AG04449 (cell line): ENCODE measurements at regions of chr22 and their contacts with region 1.

Region 1: DNA sequence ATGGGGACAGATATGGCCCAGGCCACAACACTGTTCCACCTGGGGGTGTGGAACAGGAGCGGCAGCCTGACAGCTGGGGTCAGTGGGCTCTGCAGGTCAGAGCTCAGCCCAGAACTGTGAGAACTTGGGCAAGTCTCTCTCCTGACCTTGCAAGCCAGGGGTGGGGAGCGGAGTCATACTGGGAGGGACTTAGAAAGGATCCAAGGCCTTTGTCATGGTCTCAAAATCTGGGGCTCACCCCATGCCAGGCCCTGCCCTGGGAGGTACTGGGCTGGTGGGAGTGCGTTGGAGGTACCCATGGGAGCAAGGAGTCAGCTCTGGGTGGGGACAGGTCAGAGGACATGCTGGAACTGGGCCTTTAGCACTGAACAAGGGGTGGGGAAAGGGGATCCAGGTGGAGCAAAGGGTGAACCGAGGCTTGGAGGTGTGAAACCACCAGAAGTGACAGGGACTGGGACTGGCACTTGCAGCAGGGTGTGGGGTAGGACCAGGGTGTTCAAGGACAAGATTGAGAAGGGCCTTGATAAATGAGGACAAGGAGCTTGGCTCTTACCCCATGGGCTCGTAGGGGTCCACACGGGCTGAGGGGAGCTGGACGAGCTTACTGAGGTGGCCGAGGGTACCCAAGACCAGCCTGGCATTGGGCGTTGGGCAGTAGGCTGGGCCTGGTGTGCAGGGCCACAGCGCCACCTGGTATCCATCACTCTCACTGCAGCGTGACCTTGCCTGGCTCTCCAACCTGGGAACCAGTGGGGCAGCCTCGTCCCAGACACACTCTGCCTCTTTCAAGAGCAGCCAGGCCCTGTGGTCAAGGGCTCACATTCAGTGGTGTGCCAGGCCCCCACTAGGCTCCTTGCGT is 7.4 kb upstream of the PMM1 start:
- DNase-seq: no peak
- H3K4me3 ChIP-seq: no peak overlapping the region
- CTCF ChIP-seq: peak; percentile 94

Region 2: DNA sequence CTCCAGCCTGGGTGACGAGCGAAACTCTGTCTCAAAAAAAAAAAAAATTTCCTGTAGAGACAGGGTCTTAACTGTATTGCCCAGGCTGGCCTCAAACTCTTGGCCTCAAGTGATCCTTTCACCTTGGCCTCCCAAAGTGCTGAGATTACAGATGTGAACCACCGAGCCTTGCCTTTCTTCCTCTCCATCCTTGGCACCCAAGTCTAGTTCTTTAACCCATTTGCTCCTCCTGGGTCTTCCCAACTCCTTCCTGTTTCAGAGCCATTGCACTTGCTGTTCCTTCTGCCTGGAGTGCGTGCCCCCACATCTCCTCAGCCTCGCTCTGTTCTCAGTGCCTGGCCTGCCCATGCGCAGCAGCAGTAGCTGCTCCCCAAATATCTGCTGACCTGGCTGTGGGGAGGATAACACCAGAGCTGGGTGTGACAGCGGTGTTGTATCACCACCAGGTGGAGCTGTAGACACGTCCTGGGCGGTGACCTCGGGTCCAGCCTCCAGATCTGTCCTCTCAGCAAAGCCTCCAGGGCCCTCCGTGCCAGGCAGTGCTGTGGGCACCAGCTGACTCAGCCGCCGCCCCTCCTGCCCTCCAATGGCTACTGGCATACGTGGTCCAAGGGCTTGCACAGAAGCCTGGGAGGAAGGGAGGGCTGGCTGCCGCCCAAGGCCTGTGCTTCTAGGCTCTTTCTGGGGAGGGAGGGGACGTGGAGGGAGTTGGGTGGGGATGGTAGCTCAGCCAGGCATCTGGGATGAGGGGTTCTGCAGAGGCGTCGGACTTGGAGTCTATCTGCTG is 193.3 kb before region 1 on chr22:
- CTCF ChIA-PET with region 1: interaction called, 27 read pairs
- POLR2A ChIA-PET with region 1: no interaction called
- DNase-seq: no peak
- H3K4me3 ChIP-seq: no peak overlapping the region
- CTCF ChIP-seq: peak; percentile 92

Region 3: GRCh38 chr22:41532908-41533825 is 63.8 kb before region 1 on chr22:
- CTCF ChIA-PET with region 1: interaction called, 21 read pairs
- POLR2A ChIA-PET with region 1: no interaction called
- DNase-seq: no peak
- H3K4me3 ChIP-seq: no peak overlapping the region
- CTCF ChIP-seq: peak; percentile 85

Region 4: GRCh38 chr22:41551877-41552582 is 45.0 kb before region 1 on chr22:
- CTCF ChIA-PET with region 1: interaction called, 34 read pairs
- POLR2A ChIA-PET with region 1: interaction called, 3 read pairs
- DNase-seq: no peak
- H3K4me3 ChIP-seq: no peak overlapping the region
- CTCF ChIP-seq: no peak

Region 5: DNA sequence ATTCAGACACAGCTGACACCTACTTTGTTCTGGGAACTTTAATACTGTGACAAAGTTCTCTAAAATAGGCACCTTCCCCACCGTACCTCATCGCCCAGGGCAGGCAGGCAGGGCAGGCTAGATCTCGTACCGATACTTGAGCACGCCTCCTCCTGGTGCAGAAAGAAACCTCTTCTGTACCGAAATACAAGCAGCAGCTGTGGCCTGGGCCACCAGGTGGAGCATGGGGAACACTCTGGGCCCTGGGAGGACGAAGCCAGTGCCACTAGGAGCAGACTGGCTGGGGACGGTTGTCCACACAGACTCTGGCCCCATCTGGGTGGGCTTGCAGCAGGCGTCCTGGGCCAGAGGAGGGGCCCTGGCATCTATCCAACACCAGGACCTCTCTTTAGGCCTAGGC is 20.1 kb before region 1 on chr22:
- CTCF ChIA-PET with region 1: interaction called, 12 read pairs
- POLR2A ChIA-PET with region 1: no interaction called
- DNase-seq: no peak
- H3K4me3 ChIP-seq: no peak overlapping the region
- CTCF ChIP-seq: peak; percentile 71

Region 6: GRCh38 chr22:41608386-41608785 is 11.4 kb after region 1 on chr22:
- CTCF ChIA-PET with region 1: interaction called, 14 read pairs
- POLR2A ChIA-PET with region 1: no interaction called
- DNase-seq: no peak
- H3K4me3 ChIP-seq: no peak overlapping the region
- CTCF ChIP-seq: no peak

Region 7: GRCh38 chr22:41619979-41620588 is 23.1 kb after region 1 on chr22:
- CTCF ChIA-PET with region 1: interaction called, 38 read pairs
- POLR2A ChIA-PET with region 1: no interaction called
- DNase-seq: no peak
- H3K4me3 ChIP-seq: peak overlapping the region; percentile 89
- CTCF ChIP-seq: no peak

Region 8: DNA sequence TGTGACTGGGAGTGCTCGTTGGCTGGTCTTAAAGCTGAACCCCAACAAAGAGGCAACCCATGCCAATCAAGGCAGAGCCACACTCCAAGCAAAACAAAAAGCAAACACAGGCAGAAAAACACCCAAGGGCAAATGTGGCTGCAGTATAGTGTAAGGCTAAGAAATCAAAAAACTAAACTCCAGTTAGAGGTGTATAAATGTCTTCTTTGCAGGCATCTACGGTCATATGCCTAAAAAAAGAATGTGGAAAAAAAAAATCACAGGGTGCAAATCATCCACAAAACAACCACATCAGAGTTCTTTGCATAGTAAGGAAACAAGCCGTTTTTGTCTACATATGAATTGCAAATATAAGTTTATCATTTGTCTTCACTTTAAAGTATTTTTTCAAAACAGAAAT is 1232.3 kb after region 1 on chr22:
- CTCF ChIA-PET with region 1: no interaction called
- POLR2A ChIA-PET with region 1: no interaction called
- DNase-seq: no peak
- H3K4me3 ChIP-seq: no peak overlapping the region
- CTCF ChIP-seq: no peak